Ovary (tissue), 10 donors: ENCODE measurements at regions of chr1 and their contacts with region 1.

Region 1: GRCh38 chr1:169106095-169106920 is at the start of gene ATP1B1:
- DNase-seq: peak; percentile 89 to 93 (median 90)
- H3K4me3 ChIP-seq: peak within 1 kb of the TSS; percentile 93
- H3K27ac ChIP-seq: peak within 1 kb of the TSS; percentile 58 to 88
- H3K4me1 ChIP-seq: peaks cover 7% of the 10 kb centered on the region
- H3K27me3 ChIP-seq: no peaks in the 10 kb centered on the region
- CTCF ChIP-seq: peak; percentile 73 to 88 (median 77)
- EP300 ChIP-seq: no peak
- POLR2A ChIP-seq: peak; percentile 86
- total RNA-seq, gene ATP1B1: 40.2 to 130 (median 93.8) TPM

Region 2: DNA sequence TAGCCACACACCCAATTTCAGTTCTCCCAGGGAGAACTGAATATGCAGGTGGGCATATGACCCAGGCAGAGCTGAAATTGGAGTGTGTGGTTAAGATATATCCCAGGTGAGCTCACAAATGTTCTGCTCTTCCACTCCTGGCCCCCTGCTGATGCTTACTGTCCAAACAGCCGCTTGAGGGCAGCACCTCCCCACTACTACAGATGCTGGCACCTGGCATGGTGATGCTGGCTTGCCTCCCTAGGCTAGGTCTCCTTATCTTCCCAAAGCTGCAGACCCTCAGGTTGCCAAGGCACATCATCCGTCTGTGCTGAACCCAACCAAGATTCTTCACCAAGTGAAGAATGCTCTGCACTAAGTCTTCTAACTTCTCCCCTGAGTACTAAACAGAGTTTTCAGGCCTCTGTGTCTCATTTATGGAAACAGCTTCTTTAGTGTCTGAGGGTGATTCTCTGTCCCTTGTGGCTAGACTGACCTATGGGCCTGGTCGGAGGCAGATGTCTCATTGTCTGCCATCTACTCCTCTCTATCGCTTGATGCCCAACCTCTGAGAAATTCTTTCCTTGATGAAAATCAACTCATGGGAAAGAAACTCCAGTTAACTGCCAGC is 502.7 kb before region 1 on chr1:
- intact Hi-C with region 1: loop called in 1 of 4 experiments (anchors 10 kb)
- DNase-seq: peak; percentile 74 to 87 (median 82)
- H3K4me3 ChIP-seq: no peak overlapping the region
- H3K27ac ChIP-seq: no peak overlapping the region
- H3K4me1 ChIP-seq: peaks cover 2% of the 10 kb centered on the region
- H3K27me3 ChIP-seq: no peaks in the 10 kb centered on the region
- CTCF ChIP-seq: peak; percentile 65 to 77 (median 76)
- EP300 ChIP-seq: no peak
- POLR2A ChIP-seq: no peak

Region 3: GRCh38 chr1:169485544-169486278 is 379.4 kb after region 1 on chr1 and contains the start of gene SLC19A2:
- intact Hi-C with region 1: loop called in 2 of 4 experiments (anchors 5 to 10 kb)
- DNase-seq: peak; percentile 100
- H3K4me3 ChIP-seq: peak within 1 kb of the TSS; percentile 97
- H3K27ac ChIP-seq: peak within 1 kb of the TSS; percentile 88 to 93
- H3K4me1 ChIP-seq: peaks cover 6% of the 10 kb centered on the region
- H3K27me3 ChIP-seq: no peaks in the 10 kb centered on the region
- CTCF ChIP-seq: peak; percentile 57 to 63 (median 61)
- EP300 ChIP-seq: peak; percentile 85
- POLR2A ChIP-seq: peak; percentile 93
- total RNA-seq, gene SLC19A2: 9.1 to 28.6 (median 12.1) TPM